B cell (primary cell): ENCODE measurements at regions of chr5 and their contacts with region 1.

Region 1: GRCh38 chr5:147822686-147823491 is 8.6 kb downstream of the SPINK1 start:
- DNase-seq: peak; percentile 63
- ATAC-seq: peak; percentile 58
- H3K4me3 ChIP-seq: no peak overlapping the region
- H3K4me3 Mint-ChIP-seq: no peak overlapping the region
- H3K27ac ChIP-seq: no peak overlapping the region
- H3K27ac Mint-ChIP-seq: no peak overlapping the region
- H3K4me1 ChIP-seq: no peaks in the 10 kb centered on the region
- H3K4me1 Mint-ChIP-seq: no peaks in the 10 kb centered on the region
- H3K27me3 ChIP-seq: no peaks in the 10 kb centered on the region
- H3K27me3 Mint-ChIP-seq: peaks cover 7% of the 10 kb centered on the region
- CTCF ChIP-seq: peak; percentile 94

Region 2: DNA sequence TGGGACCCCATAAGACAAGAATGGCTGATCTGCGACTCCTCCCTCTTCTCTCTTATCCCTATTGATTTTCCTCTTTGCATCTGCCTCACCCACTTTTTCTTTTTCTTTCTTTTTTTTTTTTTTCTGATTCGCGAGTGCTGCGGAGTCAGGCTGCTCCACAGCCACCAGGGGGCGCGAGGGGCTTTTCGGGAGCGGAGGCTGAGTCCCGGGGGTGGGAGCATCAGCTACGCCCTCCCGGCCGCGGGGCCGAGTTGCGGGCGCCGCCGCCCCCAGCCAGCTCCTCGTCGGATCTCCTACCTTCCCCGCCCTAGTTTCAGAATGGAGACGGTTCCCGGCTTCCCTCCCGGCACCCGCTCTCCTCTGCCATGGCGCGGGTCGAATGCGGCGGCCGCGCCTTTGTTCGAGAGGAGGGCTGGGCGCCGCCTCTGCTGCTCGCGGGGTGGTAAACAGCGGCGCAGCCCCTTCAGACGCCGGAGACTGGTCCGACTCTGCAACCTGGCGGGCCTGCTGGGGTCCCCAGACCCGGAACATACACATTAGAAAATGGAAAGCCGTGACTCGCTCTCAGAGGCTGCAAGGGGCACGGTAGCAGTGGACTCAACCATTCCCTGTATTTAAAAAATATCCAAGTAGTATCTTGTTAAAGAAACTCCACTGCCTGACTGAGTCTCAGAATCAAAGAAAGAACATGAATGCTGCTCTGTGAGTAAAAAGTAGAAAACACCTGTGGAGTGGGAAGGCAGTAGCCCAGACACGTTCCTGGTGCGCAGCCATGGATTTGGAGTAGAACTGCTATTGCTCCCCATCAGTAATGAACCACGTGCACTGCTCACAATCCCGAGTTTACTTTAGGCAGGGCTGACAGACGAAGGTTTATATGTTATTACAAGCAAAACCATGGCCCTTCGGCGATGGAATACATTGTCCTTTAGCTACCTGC is 368.7 kb before region 1 on chr5:
- CTCF ChIA-PET with region 1: interaction called, 16 read pairs
- POLR2A ChIA-PET with region 1: no interaction called
- intact Hi-C with region 1: loop called (anchors 1 kb)
- DNase-seq: peak; percentile 65
- ATAC-seq: peak; percentile 73
- H3K4me3 ChIP-seq: peak overlapping the region in 3 of 5 experiments; percentile 44 to 65 (median 48)
- H3K4me3 Mint-ChIP-seq: peak overlapping the region; percentile 81
- H3K27ac ChIP-seq: no peak overlapping the region
- H3K27ac Mint-ChIP-seq: no peak overlapping the region
- H3K4me1 ChIP-seq: peaks cover 13 to 19% of the 10 kb centered on the region in 2 donors
- H3K4me1 Mint-ChIP-seq: peaks cover 17% of the 10 kb centered on the region
- H3K27me3 ChIP-seq: peaks cover 0 to 35% (median 35%) of the 10 kb centered on the region in 4 experiments
- H3K27me3 Mint-ChIP-seq: peaks cover 81% of the 10 kb centered on the region
- CTCF ChIP-seq: peak; percentile 74

Region 3: GRCh38 chr5:147849226-147849625 is 26.3 kb after region 1 on chr5:
- CTCF ChIA-PET with region 1: no interaction called
- POLR2A ChIA-PET with region 1: no interaction called
- intact Hi-C with region 1: no loop called
- DNase-seq: no peak
- ATAC-seq: no peak
- H3K4me3 ChIP-seq: no peak overlapping the region
- H3K4me3 Mint-ChIP-seq: no peak overlapping the region
- H3K27ac ChIP-seq: no peak overlapping the region
- H3K27ac Mint-ChIP-seq: no peak overlapping the region
- H3K4me1 ChIP-seq: no peaks in the 10 kb centered on the region
- H3K4me1 Mint-ChIP-seq: no peaks in the 10 kb centered on the region
- H3K27me3 ChIP-seq: no peaks in the 10 kb centered on the region
- H3K27me3 Mint-ChIP-seq: peaks cover 14% of the 10 kb centered on the region
- CTCF ChIP-seq: no peak